ENCODE measurements at regions of chr14 and their contacts with region 1.

Region 1: DNA sequence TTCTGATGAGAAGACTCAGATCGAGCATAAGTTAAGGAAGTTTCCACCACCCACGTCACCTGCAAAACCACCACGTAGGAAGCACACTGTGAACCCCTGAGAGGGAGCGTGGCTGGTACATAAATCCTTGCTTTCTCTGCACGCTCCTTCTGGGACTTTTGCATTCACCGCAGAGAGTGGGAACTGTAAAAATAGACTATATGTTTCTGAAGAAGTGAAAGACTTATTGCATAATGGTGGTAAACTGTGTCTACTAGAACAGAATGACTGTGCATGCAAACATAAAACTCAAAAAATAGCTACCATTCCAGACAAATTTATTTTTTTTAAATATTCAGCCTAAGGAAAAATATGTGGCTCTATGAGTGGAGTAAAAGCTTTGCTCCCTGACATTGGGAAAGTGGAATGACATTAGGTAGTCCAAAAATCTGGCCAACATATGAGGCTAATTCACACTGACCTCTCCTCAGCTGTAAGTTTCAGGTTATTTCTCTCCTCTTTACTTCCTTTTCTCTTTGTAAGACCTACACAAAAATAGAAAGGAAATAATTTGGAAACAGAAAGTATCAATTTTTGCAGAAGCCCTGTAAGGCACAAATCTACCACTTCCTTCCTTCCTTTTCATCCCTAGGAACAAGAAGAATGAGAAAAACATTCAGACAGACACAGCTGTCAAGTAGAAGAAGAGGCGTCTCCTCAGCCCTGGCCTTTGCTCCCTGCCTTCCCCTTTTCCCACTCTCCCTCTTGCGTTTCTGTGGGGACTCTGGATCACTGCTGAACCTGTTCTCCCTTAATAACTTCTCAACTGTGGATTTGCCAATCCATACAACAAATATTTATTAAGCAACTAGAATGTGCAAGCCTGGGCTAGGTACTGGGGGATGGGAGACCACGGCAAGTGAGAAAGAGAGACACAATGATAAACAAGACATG is 264.3 kb upstream of the FOXN3 start:
- DNase-seq: peak; percentile 82
- H3K4me3 Mint-ChIP-seq: peak overlapping the region; percentile 30
- H3K27ac Mint-ChIP-seq: peak overlapping the region; percentile 82
- H3K4me1 Mint-ChIP-seq: peaks cover 33% of the 10 kb centered on the region
- H3K27me3 Mint-ChIP-seq: no peaks in the 10 kb centered on the region

Region 2: GRCh38 chr14:89531661-89532335 is 149.6 kb before region 1 on chr14:
- CTCF ChIA-PET with region 1: no interaction called
- POLR2A ChIA-PET with region 1: no interaction called
- intact Hi-C with region 1: no loop called
- DNase-seq: no peak
- H3K4me3 Mint-ChIP-seq: no peak overlapping the region
- H3K27ac Mint-ChIP-seq: no peak overlapping the region
- H3K4me1 Mint-ChIP-seq: peaks cover 13% of the 10 kb centered on the region
- H3K27me3 Mint-ChIP-seq: no peaks in the 10 kb centered on the region

Region 3: DNA sequence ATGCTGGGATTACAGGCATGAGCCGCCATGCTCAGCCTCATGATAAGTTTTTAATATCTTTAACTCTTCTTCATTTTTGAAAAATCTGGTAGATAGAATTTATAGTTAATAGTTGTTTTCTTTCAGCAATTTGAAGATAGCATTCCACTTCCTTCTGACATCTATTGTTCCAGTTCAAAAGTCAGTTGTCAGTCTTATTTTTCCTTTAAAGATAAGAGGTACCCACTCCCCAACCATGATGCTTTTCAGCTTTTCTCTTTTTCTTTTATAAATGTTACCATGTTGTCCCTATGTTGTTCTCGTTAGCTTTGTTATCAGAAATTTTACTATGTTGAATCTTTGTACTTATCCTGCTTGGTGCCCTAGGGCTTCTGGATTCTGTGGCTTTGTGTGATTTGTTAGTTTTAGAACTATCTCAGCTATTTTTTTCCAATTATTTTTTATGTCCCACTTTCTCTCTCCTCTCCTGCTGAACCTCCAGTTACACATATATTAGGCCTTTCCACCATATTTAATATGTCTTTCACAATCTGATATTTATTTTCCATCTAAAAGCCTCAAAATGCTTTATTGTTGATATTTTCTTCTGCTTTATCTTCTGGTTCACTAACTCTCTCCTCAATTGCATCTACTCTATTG is 82.7 kb before region 1 on chr14:
- CTCF ChIA-PET with region 1: no interaction called
- POLR2A ChIA-PET with region 1: no interaction called
- intact Hi-C with region 1: no loop called
- DNase-seq: no peak
- H3K4me3 Mint-ChIP-seq: no peak overlapping the region
- H3K27ac Mint-ChIP-seq: no peak overlapping the region
- H3K4me1 Mint-ChIP-seq: peaks cover 13% of the 10 kb centered on the region
- H3K27me3 Mint-ChIP-seq: no peaks in the 10 kb centered on the region

Region 4: GRCh38 chr14:89613260-89614008 is 67.9 kb before region 1 on chr14:
- CTCF ChIA-PET with region 1: no interaction called
- POLR2A ChIA-PET with region 1: interaction called, 3 read pairs
- intact Hi-C with region 1: loop called (anchors 1 kb)
- DNase-seq: peak; percentile 69
- H3K4me3 Mint-ChIP-seq: peak overlapping the region; percentile 56
- H3K27ac Mint-ChIP-seq: peak overlapping the region; percentile 86
- H3K4me1 Mint-ChIP-seq: peaks cover 75% of the 10 kb centered on the region
- H3K27me3 Mint-ChIP-seq: no peaks in the 10 kb centered on the region

Region 5: GRCh38 chr14:89641495-89642175 is 39.7 kb before region 1 on chr14:
- CTCF ChIA-PET with region 1: no interaction called
- POLR2A ChIA-PET with region 1: interaction called, 3 read pairs
- intact Hi-C with region 1: loop called (anchors 1 kb)
- DNase-seq: peak; percentile 35
- H3K4me3 Mint-ChIP-seq: peak overlapping the region; percentile 53
- H3K27ac Mint-ChIP-seq: peak overlapping the region; percentile 83
- H3K4me1 Mint-ChIP-seq: peaks cover 54% of the 10 kb centered on the region
- H3K27me3 Mint-ChIP-seq: no peaks in the 10 kb centered on the region

Region 6: DNA sequence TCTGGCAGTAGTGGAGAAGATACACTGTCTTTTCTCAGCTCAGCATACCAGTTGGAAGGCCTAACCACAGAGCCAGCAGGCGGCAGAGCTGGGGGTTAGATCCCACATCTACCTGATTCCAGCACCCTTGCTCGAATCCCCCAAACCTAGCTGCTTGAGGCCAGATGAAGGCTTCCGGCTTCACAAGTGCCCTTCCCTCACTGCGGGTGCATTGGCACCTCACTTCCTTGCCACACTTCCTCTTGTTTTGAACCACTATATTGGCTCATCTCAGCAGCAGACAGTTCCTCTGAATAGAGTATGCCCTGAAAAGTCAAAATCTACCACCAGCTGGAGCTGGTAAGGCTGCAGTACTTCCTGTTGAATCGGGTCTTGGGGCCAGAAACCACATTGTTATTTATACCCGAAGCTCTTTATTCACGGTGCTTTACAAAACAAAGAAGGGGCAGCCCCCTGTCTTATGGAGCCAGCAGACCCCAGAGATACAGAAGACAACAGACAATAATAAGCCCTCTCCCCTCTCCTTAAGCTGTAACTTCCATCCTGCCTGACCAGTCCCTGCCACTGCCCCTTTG is 39.5 kb after region 1 on chr14:
- CTCF ChIA-PET with region 1: interaction called, 4 read pairs
- POLR2A ChIA-PET with region 1: no interaction called
- intact Hi-C with region 1: loop called (anchors 1 kb)
- DNase-seq: peak; percentile 81
- H3K4me3 Mint-ChIP-seq: peak overlapping the region; percentile 45
- H3K27ac Mint-ChIP-seq: peak overlapping the region; percentile 94
- H3K4me1 Mint-ChIP-seq: peaks cover 70% of the 10 kb centered on the region
- H3K27me3 Mint-ChIP-seq: no peaks in the 10 kb centered on the region